IMR-90 (cell line): ENCODE measurements at regions of chr1 and their contacts with region 1.

Region 1: DNA sequence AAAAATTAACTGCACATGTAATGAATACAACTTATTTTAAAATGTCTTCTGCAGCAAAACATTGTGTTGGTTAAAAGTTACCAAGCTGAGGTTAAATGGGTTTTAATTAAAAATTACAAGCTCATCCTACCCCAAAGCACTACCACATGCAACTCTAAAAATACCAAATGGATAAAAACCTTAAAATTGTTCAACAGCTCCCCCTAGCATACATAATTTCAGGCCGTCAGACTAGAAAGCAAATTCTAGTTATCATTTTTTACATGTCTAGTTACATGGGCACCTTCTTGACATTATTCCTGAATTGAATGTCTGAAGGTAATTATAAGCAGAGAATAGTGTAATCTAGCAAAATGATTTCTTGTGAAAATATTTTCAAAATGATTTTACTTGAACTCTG is 176.5 kb downstream of the C1orf21 start:
- DNase-seq: peak; percentile 40
- ATAC-seq: peak; percentile 42; the same call in 1 of the 2 replicates
- H3K4me3 ChIP-seq: no peak overlapping the region
- H3K27ac ChIP-seq: no peak overlapping the region
- H3K4me1 ChIP-seq: peaks cover 3% of the 10 kb centered on the region; the same call in 1 of the 2 replicates
- H3K27me3 ChIP-seq: no peaks in the 10 kb centered on the region
- CTCF ChIP-seq: peak; percentile 66
- POLR2A ChIP-seq: no peak
- RAD21 ChIP-seq: peak; percentile 65

Region 2: DNA sequence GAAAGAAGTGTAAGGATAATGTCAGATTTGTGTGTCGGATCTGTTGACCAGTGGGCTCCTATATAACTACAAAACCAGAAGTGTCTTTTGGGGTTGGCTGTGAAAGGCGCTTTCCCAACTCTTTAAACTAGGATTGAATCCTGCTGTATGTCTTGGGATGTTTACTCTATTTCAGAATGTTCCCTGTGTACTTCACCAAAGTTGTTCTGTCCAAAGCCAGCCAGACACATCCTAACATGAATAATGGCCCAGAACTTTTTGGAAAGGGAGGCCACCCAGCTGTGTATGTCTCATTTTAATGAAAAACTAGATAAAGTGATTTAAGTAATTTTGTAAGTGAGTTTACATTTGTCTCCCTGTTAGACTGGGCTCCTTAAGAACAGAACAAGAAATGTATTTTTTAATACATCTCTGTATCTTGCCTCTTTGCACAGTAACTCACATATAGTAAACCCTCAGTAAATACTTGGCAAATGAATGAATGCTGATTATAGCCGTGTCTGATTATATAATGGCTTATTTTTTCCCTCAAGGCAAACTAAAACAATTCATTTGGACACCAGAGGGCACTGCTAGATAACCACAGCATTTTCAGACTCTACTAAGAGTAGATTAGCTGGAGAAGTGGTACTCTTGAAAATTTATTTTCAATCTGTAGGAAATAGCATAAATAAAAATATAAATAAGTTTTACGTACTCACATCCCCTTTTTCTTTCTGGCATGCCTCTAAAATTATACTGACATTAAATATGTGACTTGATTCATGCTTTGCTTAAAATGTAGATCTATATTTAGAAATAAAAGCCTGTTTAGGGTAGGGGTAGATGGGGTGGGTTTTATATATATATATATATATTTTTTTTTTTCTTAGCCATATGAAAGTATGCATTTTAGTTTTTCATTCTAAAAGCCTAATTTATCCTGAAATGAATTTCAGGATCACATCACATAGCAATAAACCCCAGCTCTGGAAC is 488.0 kb before region 1 on chr1:
- CTCF ChIA-PET with region 1: no interaction called
- POLR2A ChIA-PET with region 1: no interaction called
- dilution Hi-C with region 1: no loop called
- in situ Hi-C with region 1: loop called (anchors 25 kb)
- intact Hi-C with region 1: loop called (anchors 2 kb)
- DNase-seq: peak; percentile 75
- ATAC-seq: peak; percentile 87
- H3K4me3 ChIP-seq: no peak overlapping the region
- H3K27ac ChIP-seq: no peak overlapping the region
- H3K4me1 ChIP-seq: peaks cover 3% of the 10 kb centered on the region; the same call in 1 of the 2 replicates
- H3K27me3 ChIP-seq: no peaks in the 10 kb centered on the region
- CTCF ChIP-seq: peak; percentile 91
- POLR2A ChIP-seq: peak; percentile 26; the same call in 1 of the 2 replicates
- RAD21 ChIP-seq: peak; percentile 98

Region 3: DNA sequence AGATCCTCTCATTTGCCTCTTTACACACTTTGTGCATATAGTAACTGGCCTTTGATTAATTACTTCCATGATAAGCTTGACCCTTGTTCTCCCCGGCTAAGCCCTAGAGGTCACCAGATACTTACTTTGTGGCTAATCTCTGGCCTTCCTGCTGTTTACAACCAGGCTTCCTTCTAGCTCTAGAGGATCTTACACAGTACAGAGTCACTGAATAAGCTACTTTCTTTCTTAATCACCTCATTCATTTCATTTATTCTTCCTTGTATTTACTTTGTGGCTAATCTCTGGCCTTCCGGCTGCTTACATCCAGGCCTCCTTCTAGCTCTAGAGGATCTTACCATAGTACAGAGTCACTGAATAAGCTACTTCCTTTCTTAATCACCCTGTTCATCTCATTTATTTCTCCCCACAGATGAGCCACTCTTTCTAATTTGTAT is 320.8 kb before region 1 on chr1:
- CTCF ChIA-PET with region 1: interaction called, 11 read pairs
- POLR2A ChIA-PET with region 1: no interaction called
- dilution Hi-C with region 1: no loop called
- in situ Hi-C with region 1: no loop called
- intact Hi-C with region 1: no loop called
- DNase-seq: peak; percentile 91
- ATAC-seq: peak; percentile 98
- H3K4me3 ChIP-seq: no peak overlapping the region
- H3K27ac ChIP-seq: no peak overlapping the region
- H3K4me1 ChIP-seq: 0 out of 2 replicates have a peak, but pooled peaks cover 2% of the 10 kb centered on the region
- H3K27me3 ChIP-seq: peaks cover 41% of the 10 kb centered on the region
- CTCF ChIP-seq: peak; percentile 26; the same call in 1 of the 2 replicates
- POLR2A ChIP-seq: no peak
- RAD21 ChIP-seq: peak; percentile 28; the same call in 1 of the 2 replicates

Region 4: DNA sequence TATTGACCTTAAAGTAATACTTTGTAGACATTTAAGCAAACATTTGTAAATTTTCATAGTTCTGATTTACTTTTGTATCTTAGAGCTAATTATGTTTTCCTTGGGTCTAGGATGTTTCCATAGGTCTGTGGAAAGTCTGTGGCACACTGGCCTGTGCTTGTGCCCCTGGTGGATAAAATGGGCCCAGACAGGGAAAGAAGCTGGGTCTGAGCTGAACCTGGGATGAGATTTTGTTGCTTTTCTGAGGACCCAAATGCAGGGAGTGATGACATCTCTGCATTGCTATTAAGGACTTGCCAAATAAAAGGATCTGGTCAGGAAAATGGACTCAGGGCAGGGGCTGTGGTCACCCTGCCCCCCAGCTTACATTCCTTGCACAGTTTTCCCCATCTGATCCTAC is 134.7 kb before region 1 on chr1:
- CTCF ChIA-PET with region 1: no interaction called
- POLR2A ChIA-PET with region 1: no interaction called
- dilution Hi-C with region 1: no loop called
- in situ Hi-C with region 1: no loop called
- intact Hi-C with region 1: no loop called
- DNase-seq: no peak
- ATAC-seq: no peak
- H3K4me3 ChIP-seq: no peak overlapping the region
- H3K27ac ChIP-seq: no peak overlapping the region
- H3K4me1 ChIP-seq: no peaks in the 10 kb centered on the region
- H3K27me3 ChIP-seq: no peaks in the 10 kb centered on the region
- CTCF ChIP-seq: no peak
- POLR2A ChIP-seq: no peak
- RAD21 ChIP-seq: no peak